Activated CD4-positive, alpha-beta T cell treated with anti-CD3 and anti-CD28 coated beads for 36 hours (primary cell): ENCODE measurements at regions of chr20 and their contacts with region 1.

Region 1: DNA sequence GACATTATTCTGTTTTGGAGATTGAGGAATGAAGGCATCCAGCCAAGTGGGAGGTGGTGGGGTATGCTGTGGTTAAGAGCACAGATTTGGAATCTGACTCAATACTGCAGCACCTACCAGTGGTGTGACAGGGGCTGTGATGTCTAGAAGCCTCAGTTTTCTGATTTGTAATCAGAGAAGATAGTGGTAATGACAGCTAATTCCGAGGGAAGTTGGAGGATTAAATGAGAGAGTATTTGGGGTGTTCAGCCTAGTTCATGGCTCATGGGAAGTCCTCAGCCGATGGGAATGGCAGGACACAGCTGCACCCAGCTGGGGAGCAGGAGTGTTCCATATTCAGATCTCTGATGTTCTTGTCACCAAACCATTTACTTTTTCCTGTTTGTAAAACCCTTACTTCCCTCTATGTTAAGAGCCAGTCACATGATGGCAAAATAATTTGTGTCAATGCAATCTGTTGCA is 9.3 kb downstream of the SLC9A8 start:
- DNase-seq: no peak
- ATAC-seq: peak; percentile 37
- H3K4me3 Mint-ChIP-seq: no peak overlapping the region
- H3K27ac Mint-ChIP-seq: no peak overlapping the region
- H3K4me1 Mint-ChIP-seq: peaks cover 48% of the 10 kb centered on the region
- H3K27me3 Mint-ChIP-seq: no peaks in the 10 kb centered on the region

Region 2: DNA sequence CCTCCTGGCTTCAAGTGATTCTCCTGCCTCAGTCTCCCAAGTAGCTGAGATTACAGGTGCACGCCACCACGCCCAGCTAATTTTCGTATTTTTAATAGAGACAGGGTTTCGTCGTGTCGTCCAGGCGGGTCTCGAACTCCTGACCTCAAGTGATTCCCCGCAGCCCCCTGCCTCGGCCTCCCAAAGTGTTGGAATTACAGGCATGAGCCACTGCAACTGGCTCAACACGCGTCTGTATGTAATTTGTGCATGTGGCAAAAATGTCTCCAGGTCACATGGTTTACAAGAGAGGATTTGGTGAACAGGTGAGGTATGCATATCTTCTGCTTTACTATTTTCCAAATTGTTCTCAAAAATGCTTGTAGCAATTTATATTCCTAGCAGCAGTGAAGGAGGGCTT is 100.5 kb before region 1 on chr20:
- CTCF ChIA-PET with region 1: no interaction called
- POLR2A ChIA-PET with region 1: interaction called, 15 read pairs
- intact Hi-C with region 1: no loop called
- DNase-seq: no peak
- ATAC-seq: no peak
- H3K4me3 Mint-ChIP-seq: no peak overlapping the region
- H3K27ac Mint-ChIP-seq: no peak overlapping the region
- H3K4me1 Mint-ChIP-seq: peaks cover 18% of the 10 kb centered on the region
- H3K27me3 Mint-ChIP-seq: peaks cover 5% of the 10 kb centered on the region

Region 3: GRCh38 chr20:49846206-49846807 is 24.4 kb after region 1 on chr20:
- CTCF ChIA-PET with region 1: interaction called, 22 read pairs
- POLR2A ChIA-PET with region 1: no interaction called
- intact Hi-C with region 1: no loop called
- DNase-seq: peak; percentile 67
- ATAC-seq: peak; percentile 81
- H3K4me3 Mint-ChIP-seq: no peak overlapping the region
- H3K27ac Mint-ChIP-seq: no peak overlapping the region
- H3K4me1 Mint-ChIP-seq: peaks cover 7% of the 10 kb centered on the region
- H3K27me3 Mint-ChIP-seq: no peaks in the 10 kb centered on the region